ENCODE measurements at regions of chr6 and their contacts with region 1.

Region 1: DNA sequence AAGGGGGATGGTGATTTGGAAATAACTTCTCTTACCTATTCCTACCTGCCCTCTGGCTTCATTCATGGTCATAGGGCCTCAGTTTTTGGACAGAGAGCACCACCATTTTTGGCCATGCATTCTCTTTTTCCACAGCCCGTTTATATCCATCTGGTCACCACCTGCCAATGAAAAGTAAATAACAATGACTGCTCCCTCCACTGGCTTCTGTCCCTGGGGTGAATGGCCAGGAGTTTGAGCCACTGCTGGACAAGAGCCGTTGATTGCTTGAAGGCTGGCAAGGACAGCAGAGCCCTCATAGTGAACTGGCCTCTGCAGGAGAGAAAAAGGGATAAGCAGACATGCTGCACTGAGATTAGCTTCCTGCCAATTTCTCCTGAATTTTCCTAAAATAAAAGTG is 261.8 kb downstream of the ADGB start:
- DNase-seq: no peak
- H3K4me3 ChIP-seq: no peak overlapping the region
- H3K27ac ChIP-seq: no peak overlapping the region
- H3K4me1 ChIP-seq: peaks cover 0 to 18% (median 6%) of the 10 kb centered on the region in 6 donors
- H3K27me3 ChIP-seq: no peaks in the 10 kb centered on the region
- CTCF ChIP-seq: no peak
- POLR2A ChIP-seq: no peak

Region 2: DNA sequence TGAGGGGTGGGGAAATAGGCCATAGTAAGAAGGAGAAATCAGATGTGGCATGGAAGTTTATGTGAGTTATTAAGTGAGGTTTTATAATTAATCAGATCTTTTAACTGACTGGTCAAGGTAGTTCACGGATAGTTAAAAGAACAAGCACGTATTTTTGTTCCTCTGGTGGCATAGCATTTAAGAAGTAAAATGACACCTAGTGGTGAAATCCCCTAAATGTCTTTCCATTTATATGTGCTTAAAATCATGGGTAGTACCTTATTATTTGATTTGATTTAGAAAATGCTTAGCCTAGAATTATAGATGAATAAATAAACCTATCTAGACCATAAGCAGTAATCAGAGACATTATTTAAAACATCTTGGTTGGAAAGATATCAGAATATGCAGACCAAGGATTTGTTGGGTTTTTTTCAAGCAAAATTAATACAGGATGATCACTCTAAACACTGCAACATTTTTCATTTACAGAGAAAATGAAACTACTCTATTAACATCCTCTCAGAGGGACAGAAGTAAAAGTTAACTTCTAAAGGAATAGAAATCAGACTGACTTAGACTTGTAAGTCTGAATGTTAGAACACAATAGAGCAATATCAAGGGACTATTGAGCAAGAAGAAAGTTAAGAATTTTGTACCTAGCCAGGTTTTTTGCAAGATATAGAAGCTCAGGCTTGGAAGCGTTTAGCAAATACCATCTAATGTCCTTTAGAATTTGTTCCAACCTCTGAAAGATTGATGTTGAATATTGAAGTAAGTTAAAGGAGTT is 424.7 kb after region 1 on chr6:
- intact Hi-C with region 1: loop called (anchors 10 kb)
- DNase-seq: no peak
- H3K4me3 ChIP-seq: no peak overlapping the region
- H3K27ac ChIP-seq: peak overlapping the region in 5 of 8 donors; percentile 5 to 50 (median 13)
- H3K4me1 ChIP-seq: peaks cover 0 to 22% (median 11%) of the 10 kb centered on the region in 6 donors
- H3K27me3 ChIP-seq: no peaks in the 10 kb centered on the region
- CTCF ChIP-seq: peak in 10 of 11 experiments; percentile 17 to 61 (median 53)
- POLR2A ChIP-seq: no peak

Measured in spleen (tissue), 13 donors.